IMR-90 (cell line): ENCODE measurements at regions of chr7 and their contacts with region 1.

Region 1: DNA sequence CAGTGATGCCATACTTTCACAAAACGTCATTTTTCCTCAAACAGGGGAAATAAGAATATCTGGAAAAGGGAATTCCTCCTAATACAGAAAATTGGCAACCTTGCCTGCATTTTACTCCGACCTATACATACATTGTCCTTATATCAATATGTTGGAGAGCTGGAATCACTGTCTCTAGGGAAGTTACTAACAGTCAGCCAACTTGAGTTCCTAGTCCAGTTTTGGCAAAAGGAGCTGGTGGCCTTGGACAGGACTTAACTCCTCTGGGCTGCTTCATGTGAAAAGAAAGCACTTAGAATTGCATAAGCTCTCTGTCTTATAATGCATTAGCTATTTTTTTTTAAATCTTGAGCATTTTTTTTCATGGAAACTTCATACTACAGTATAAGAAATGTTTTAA is 174.2 kb upstream of the HGF start:
- DNase-seq: no peak
- ATAC-seq: no peak
- H3K4me3 ChIP-seq: no peak overlapping the region
- H3K27ac ChIP-seq: no peak overlapping the region
- H3K4me1 ChIP-seq: no peaks in the 10 kb centered on the region
- H3K27me3 ChIP-seq: no peaks in the 10 kb centered on the region
- CTCF ChIP-seq: no peak
- POLR2A ChIP-seq: no peak
- RAD21 ChIP-seq: no peak

Region 2: GRCh38 chr7:81744389-81744788 is 199.7 kb before region 1 on chr7:
- CTCF ChIA-PET with region 1: no interaction called
- POLR2A ChIA-PET with region 1: interaction called, 10 read pairs
- dilution Hi-C with region 1: no loop called
- in situ Hi-C with region 1: no loop called
- intact Hi-C with region 1: no loop called
- DNase-seq: no peak
- ATAC-seq: no peak
- H3K4me3 ChIP-seq: no peak overlapping the region
- H3K27ac ChIP-seq: no peak overlapping the region
- H3K4me1 ChIP-seq: no peaks in the 10 kb centered on the region
- H3K27me3 ChIP-seq: no peaks in the 10 kb centered on the region
- CTCF ChIP-seq: no peak
- POLR2A ChIP-seq: no peak
- RAD21 ChIP-seq: no peak

Region 3: DNA sequence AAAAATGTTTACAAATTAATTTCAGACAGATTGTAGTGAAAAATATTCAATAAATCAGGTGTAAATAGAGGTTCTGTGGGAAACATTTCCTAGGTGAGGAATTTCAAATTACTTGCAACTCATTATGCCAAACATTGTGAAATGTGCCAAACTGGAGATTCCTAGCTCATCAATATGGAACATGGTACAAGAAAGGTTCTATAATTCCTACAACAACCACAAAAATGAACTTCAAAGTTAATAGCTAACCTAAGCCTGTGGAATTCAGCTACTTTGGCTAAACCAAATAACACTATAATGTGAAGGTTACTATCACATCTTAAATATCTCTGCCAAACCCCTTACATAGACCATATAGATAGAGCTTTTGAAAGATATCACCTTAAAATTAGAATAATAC is 49.1 kb after region 1 on chr7:
- CTCF ChIA-PET with region 1: no interaction called
- POLR2A ChIA-PET with region 1: no interaction called
- dilution Hi-C with region 1: no loop called
- in situ Hi-C with region 1: no loop called
- intact Hi-C with region 1: no loop called
- DNase-seq: no peak
- ATAC-seq: no peak
- H3K4me3 ChIP-seq: no peak overlapping the region
- H3K27ac ChIP-seq: no peak overlapping the region
- H3K4me1 ChIP-seq: no peaks in the 10 kb centered on the region
- H3K27me3 ChIP-seq: no peaks in the 10 kb centered on the region
- CTCF ChIP-seq: no peak
- POLR2A ChIP-seq: no peak
- RAD21 ChIP-seq: no peak